Activated CD4-positive, alpha-beta memory T cell treated with anti-CD3 and anti-CD28 coated beads, Interleukin-2, amount 10 ng/mL, durations not matched to agents 7 days and 5 days (primary cell): ENCODE measurements at regions of chr16 and their contacts with region 1.

Region 1: DNA sequence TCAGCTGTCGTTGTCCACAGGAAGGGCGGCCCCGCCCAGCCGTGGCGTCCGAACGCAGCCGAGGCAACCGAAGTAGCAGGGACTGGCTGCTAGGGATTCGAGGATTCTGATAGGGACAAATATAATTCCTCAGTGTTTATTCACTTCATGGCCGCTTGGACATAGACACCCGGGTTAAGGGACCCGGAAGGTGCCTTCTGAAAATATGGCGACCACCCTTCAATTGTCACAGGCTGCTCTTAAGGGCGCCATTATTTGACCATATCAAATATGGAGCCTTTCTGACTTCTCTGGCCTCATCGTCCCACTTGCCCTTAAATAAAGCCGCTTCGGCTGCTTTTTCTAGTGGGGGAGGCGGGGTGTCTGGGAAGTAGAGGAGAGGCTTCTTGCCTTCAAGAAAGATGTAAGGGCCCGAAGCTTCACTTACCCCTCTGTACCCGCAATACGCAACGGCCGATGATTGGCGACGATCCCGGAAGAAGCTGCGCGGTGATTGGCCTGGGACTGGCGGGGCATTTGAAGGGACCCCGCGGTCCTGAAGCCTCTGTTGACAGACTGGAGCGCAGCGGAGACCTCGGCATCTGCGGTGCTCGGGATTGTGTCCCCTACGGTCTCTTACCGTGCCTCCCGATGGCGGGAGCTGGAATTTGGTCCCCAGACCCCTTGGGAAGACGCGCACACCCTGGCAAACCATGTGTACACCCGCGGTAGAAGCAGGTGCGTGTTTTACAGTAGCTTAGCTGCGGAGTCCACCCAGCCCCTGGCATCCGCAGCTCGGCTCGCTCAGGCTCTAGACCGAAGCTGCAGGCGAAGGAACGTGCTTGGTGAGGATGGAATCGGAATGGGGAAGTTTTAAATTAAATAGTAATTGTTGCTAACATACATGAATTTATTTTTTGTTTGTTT is at the start of gene ZNF688:
- DNase-seq: peak; percentile 96
- H3K4me3 Mint-ChIP-seq: peak within 1 kb of the TSS; percentile 82
- H3K27ac Mint-ChIP-seq: peak within 1 kb of the TSS; percentile 90
- H3K4me1 Mint-ChIP-seq: peaks cover 55% of the 10 kb centered on the region
- H3K27me3 Mint-ChIP-seq: no peaks in the 10 kb centered on the region
- total RNA-seq, gene ZNF688: 19.2 to 22.8 TPM

Region 2: DNA sequence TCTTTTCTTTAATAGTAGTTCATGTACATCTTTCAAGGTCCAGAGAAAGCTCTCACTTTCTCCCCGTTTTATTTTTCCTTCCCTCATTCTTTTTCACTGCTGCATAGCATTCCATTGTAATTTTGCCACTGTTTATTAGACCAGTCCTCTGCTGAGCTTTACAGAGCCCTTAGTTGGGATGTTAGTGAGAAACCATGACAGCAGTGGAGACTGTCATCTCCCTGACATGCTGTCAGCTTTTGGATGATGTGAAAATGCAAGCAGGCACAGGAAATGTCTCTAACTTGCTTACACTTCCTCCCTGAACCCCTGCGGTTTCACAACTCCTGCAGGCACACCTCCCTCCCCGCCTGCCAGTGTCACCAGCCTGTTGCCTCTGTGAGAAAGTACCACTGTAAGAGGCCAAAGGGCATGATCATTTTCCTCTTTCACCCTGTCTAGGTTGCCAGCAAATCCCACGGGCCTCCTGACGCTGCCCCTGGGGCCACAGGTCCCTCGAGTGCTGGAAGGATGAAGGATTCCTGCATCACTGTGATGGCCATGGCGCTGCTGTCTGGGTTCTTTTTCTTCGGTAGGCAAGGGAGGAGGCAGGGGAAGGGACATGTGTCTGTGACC is 99.5 kb before region 1 on chr16 and contains the start of gene ITGAL:
- CTCF ChIA-PET with region 1: no interaction called
- POLR2A ChIA-PET with region 1: interaction called, 19 read pairs
- DNase-seq: peak; percentile 92
- H3K4me3 Mint-ChIP-seq: peak within 1 kb of the TSS; percentile 98
- H3K27ac Mint-ChIP-seq: peak within 1 kb of the TSS; percentile 96
- H3K4me1 Mint-ChIP-seq: peaks cover 58% of the 10 kb centered on the region
- H3K27me3 Mint-ChIP-seq: no peaks in the 10 kb centered on the region
- total RNA-seq, gene ITGAL: 583 to 586 TPM

Region 3: GRCh38 chr16:30551781-30552180 is 20.2 kb before region 1 on chr16:
- CTCF ChIA-PET with region 1: interaction called, 26 read pairs
- POLR2A ChIA-PET with region 1: interaction called, 129 read pairs
- DNase-seq: peak; percentile 78
- H3K4me3 Mint-ChIP-seq: peak overlapping the region; percentile 58
- H3K27ac Mint-ChIP-seq: peak overlapping the region; percentile 98
- H3K4me1 Mint-ChIP-seq: peaks cover 57% of the 10 kb centered on the region
- H3K27me3 Mint-ChIP-seq: no peaks in the 10 kb centered on the region

Region 4: GRCh38 chr16:30585400-30586189 is 13.6 kb after region 1 on chr16 and contains the start of gene ZNF785:
- CTCF ChIA-PET with region 1: interaction called, 8 read pairs
- POLR2A ChIA-PET with region 1: interaction called, 88 read pairs
- DNase-seq: peak; percentile 96
- H3K4me3 Mint-ChIP-seq: peak within 1 kb of the TSS; percentile 77
- H3K27ac Mint-ChIP-seq: peak within 1 kb of the TSS; percentile 61
- H3K4me1 Mint-ChIP-seq: peaks cover 36% of the 10 kb centered on the region
- H3K27me3 Mint-ChIP-seq: no peaks in the 10 kb centered on the region
- total RNA-seq, gene ZNF785: 12.9 to 13.3 TPM

Region 5: DNA sequence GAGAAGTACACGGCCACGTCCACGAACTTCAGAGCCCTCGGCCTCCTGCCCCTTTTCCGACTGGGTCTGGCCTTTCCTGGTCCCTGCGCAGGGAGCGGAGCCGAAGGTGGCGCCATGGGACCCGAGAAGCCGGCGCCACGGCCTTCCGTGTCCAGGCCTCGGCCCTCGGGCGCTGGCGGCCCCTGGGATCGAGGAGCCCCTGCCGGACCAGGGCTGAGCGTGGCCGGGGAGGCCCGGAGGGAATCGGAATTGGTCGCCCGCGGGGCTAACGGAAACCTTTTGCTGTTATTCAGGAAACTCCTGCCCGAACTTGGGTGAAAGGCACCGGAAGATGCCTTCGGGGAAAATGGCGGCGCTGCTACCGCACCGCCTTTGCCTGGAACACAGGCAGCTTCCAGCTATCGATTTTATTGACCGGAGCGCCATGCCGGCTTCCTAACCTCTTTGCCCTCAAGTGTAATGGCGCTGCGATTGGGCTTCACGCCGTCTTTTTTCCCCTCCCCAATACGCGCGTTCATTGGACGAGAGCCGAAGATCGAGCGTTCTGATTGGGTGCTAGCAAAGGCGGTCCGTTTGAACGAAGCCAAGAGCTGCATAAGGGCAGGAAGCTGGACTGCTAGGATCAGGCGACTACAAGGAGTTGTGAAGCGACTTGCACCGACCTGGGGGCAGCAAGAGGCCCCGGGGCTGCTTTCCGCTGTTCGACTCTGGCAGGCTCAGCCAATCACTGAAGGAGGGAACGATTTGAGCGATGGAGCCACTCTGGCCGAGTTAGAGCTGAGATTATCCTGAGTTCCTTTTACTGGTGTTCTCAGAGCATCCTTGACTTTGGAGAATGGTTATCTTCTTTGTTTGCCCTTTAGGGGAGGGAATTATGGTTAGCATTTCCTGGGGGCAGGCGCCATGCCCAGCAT is 38.2 kb after region 1 on chr16 and contains the start of gene ZNF689:
- CTCF ChIA-PET with region 1: interaction called, 4 read pairs
- POLR2A ChIA-PET with region 1: interaction called, 20 read pairs
- DNase-seq: peak; percentile 96
- H3K4me3 Mint-ChIP-seq: peak within 1 kb of the TSS; percentile 83
- H3K27ac Mint-ChIP-seq: peak within 1 kb of the TSS; percentile 90
- H3K4me1 Mint-ChIP-seq: peaks cover 29% of the 10 kb centered on the region
- H3K27me3 Mint-ChIP-seq: no peaks in the 10 kb centered on the region
- total RNA-seq, gene ZNF689: 9.9 to 11.7 TPM